ENCODE measurements at regions of chr6 and their contacts with region 1.

Region 1: GRCh38 chr6:137415127-137415833 is 78.9 kb downstream of the OLIG3 start:
- DNase-seq: peak; percentile 14 to 23
- ATAC-seq: peak; percentile 85 to 91
- H3K4me3 ChIP-seq: peak overlapping the region; percentile 38 to 50 (median 48)
- H3K27ac ChIP-seq: peak overlapping the region; percentile 3 to 29 (median 28)
- H3K4me1 ChIP-seq: peaks cover 5 to 6% of the 10 kb centered on the region in 2 donors
- H3K27me3 ChIP-seq: no peaks in the 10 kb centered on the region
- CTCF ChIP-seq: peak in 3 of 5 experiments; percentile 40 to 60 (median 57)
- POLR2A ChIP-seq: no peak

Region 2: GRCh38 chr6:137271245-137272183 is 143.8 kb before region 1 on chr6:
- in situ Hi-C with region 1: loop called in 1 of 4 experiments (anchors 10 kb)
- intact Hi-C with region 1: loop called (anchors 1 kb)
- DNase-seq: no peak
- ATAC-seq: peak; percentile 56 to 81
- H3K4me3 ChIP-seq: no peak overlapping the region
- H3K27ac ChIP-seq: no peak overlapping the region
- H3K4me1 ChIP-seq: no peaks in the 10 kb centered on the region
- H3K27me3 ChIP-seq: no peaks in the 10 kb centered on the region
- CTCF ChIP-seq: peak; percentile 57 to 86 (median 79)
- POLR2A ChIP-seq: no peak

Region 3: GRCh38 chr6:137601471-137601870 is 186.2 kb after region 1 on chr6:
- in situ Hi-C with region 1: no loop called
- intact Hi-C with region 1: no loop called
- DNase-seq: no peak
- ATAC-seq: no peak
- H3K4me3 ChIP-seq: no peak overlapping the region
- H3K27ac ChIP-seq: no peak overlapping the region
- H3K4me1 ChIP-seq: no peaks in the 10 kb centered on the region
- H3K27me3 ChIP-seq: peaks cover 0 to 10% (median 0%) of the 10 kb centered on the region in 3 donors
- CTCF ChIP-seq: no peak
- POLR2A ChIP-seq: no peak